AG04449 (cell line): ENCODE measurements at regions of chr3 and their contacts with region 1.

Region 1: DNA sequence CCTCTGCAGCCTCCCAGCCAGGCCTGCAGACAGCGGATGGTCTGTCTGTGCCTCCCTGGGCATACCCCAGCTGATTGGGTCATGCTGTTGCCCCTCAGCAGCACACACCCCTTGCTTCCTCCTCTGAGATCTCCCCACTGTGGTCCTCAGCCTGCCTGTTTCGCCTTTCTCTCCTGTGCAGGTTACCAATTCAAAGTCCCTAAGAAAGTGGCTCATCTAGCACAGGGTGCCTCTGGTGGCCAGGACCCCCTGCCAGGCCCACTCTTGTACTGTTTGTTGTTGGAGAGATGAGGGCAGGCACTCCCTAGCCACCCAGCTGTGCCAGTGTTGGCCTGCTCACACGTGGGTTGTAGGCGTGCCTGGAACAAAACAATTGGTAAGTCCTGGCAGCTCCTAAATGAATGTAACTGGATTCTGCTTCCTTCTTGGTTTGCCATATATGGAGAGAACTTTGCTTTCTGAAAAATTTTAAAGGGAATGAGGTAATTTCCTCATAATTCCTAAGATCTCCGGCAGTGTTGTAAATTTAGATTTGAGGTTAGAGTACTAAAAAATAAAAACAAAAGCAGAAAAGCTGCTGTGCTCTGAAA is 213.2 kb upstream of the IL12A start:
- DNase-seq: no peak
- H3K4me3 ChIP-seq: no peak overlapping the region
- CTCF ChIP-seq: no peak

Region 2: DNA sequence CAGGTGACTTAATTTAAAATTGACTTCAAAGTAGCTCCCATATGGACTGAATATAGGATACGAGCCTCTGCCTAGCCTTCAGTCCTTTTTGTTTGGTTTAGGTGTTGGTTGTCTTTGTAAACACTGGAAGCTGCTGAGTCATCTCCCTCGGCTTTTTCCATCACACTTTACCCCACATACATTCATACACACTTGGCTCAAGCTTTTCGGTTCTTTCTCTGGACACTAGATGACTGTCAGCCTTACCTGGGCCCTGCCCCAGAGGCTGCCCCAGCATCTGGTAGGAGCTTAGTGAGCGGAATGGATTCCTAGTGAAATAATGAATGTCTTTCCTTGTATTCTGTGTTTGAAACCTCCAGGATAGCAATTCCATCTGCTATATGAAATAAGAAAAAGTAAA is 11.7 kb after region 1 on chr3:
- CTCF ChIA-PET with region 1: interaction called, 19 read pairs
- POLR2A ChIA-PET with region 1: no interaction called
- DNase-seq: no peak
- H3K4me3 ChIP-seq: no peak overlapping the region
- CTCF ChIP-seq: no peak

Region 3: GRCh38 chr3:159964166-159964973 is 188.9 kb after region 1 on chr3:
- CTCF ChIA-PET with region 1: no interaction called
- POLR2A ChIA-PET with region 1: no interaction called
- DNase-seq: peak; percentile 38
- H3K4me3 ChIP-seq: no peak overlapping the region; the same call in 1 of the 2 replicates
- CTCF ChIP-seq: no peak

Region 4: GRCh38 chr3:160296591-160296990 is 521.1 kb after region 1 on chr3:
- CTCF ChIA-PET with region 1: no interaction called
- POLR2A ChIA-PET with region 1: no interaction called
- DNase-seq: peak; percentile 10
- H3K4me3 ChIP-seq: no peak overlapping the region
- CTCF ChIP-seq: no peak